Activated T-helper 1 cell treated with anti-CD3 and anti-CD28 coated beads, Interleukin-12 subunit alpha, Interleukin-12 subunit beta, Interleukin-2, Interleukin-4 antibody, amounts not matched to agents 30 ng/mL and 10 ng/mL and 1 ng/mL, durations not matched to agents 14 hours and 24 hours and 36 hours (primary cell): ENCODE measurements at regions of chr16 and their contacts with region 1.

Region 1: GRCh38 chr16:75011634-75012307 is 12.9 kb downstream of the ZNRF1 start:
- DNase-seq: peak; percentile 53
- H3K4me3 Mint-ChIP-seq: peak overlapping the region; percentile 80
- H3K27ac Mint-ChIP-seq: peak overlapping the region; percentile 98
- H3K4me1 Mint-ChIP-seq: peaks cover 65% of the 10 kb centered on the region
- H3K27me3 Mint-ChIP-seq: no peaks in the 10 kb centered on the region

Region 2: GRCh38 chr16:74843719-74844433 is 167.9 kb before region 1 on chr16:
- intact Hi-C with region 1: no loop called
- DNase-seq: no peak
- H3K4me3 Mint-ChIP-seq: no peak overlapping the region
- H3K27ac Mint-ChIP-seq: no peak overlapping the region
- H3K4me1 Mint-ChIP-seq: no peaks in the 10 kb centered on the region
- H3K27me3 Mint-ChIP-seq: peaks cover 15% of the 10 kb centered on the region

Region 3: DNA sequence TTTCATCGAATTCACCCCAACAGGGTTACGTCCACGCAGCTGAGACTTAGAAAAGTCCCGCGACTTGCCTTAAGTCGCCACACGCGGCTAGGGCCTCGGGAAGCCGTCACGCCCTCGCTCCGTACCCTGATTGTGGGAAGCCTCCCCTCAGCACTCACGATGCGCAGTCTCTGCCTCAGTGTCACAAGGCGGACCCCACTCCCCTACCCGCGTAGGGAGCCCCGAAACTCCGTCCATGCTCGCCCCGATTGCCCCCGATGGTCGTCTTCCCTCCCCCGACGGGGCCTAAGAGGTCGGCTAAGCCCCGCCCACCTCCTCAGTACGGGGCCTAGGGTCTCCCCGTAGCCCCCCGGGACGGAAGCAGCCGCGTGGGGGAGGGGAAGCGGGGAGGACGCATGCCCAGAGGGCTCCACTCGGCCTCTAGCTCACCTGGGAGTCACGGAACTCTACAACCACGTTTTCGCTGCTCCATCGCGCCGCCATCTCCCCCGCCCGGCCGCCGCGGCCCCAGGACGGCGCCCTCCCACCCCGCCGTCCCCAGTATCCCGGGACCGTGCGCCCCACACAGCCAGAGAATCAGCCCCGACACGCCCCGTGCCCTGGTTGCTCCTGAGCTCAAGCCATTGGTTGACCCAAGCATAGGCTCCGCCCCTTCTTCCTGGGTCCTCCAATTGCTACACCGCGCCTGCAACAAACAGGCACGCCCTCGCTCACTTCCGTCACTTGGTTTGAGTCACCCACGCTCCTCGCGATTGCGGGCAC is 27.1 kb before region 1 on chr16 and contains the start of gene WDR59:
- intact Hi-C with region 1: loop called (anchors 1 kb)
- DNase-seq: peak; percentile 99
- H3K4me3 Mint-ChIP-seq: peak within 1 kb of the TSS; percentile 90
- H3K27ac Mint-ChIP-seq: peak within 1 kb of the TSS; percentile 90
- H3K4me1 Mint-ChIP-seq: peaks cover 14% of the 10 kb centered on the region
- H3K27me3 Mint-ChIP-seq: peaks cover 3% of the 10 kb centered on the region
- total RNA-seq, gene WDR59: 85.9 and 95.3 TPM in 2 replicates

Region 4: GRCh38 chr16:75023009-75023408 is 11.2 kb after region 1 on chr16:
- intact Hi-C with region 1: loop called (anchors 1 kb)
- DNase-seq: no peak
- H3K4me3 Mint-ChIP-seq: peak overlapping the region; percentile 46
- H3K27ac Mint-ChIP-seq: peak overlapping the region; percentile 86
- H3K4me1 Mint-ChIP-seq: peaks cover 47% of the 10 kb centered on the region
- H3K27me3 Mint-ChIP-seq: no peaks in the 10 kb centered on the region

Region 5: DNA sequence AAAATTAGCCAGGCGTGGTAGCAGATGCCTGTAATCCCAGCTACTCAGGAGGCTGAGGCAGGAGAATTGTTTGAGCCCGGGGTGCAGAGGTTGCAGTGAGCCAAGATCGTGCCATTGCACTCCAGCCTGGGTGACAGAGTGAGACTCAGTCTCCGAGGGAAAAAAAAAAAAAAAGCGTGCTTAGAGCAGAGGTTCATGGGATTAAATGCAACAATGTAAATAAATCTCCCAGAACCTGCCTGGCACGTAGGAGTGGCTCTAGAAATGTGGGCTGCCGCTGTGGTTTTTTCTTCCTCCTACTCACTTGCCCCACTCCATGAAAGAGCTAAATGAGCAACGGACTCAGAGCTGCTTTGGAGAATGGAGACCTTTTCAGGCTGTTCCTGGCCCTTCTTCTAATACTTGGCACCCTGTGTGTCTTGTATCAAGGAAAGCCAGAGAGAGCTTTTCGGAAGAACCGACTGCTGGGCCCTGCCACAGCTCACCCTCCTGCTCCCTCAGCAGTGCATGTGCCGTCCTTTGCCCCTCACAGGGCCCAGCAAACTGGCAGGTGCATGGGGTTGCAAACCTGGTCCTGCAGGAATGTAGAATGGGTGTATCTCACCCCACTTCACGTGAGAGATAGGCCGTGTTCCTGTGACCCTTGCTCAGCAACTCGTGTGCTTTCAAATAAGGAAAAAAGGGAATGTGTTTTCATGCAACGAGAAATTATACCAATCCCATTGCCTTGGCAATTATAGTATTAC is 52.8 kb after region 1 on chr16:
- intact Hi-C with region 1: loop called (anchors 2 kb)
- DNase-seq: peak; percentile 17
- H3K4me3 Mint-ChIP-seq: peak overlapping the region; percentile 70
- H3K27ac Mint-ChIP-seq: peak overlapping the region; percentile 85
- H3K4me1 Mint-ChIP-seq: peaks cover 79% of the 10 kb centered on the region
- H3K27me3 Mint-ChIP-seq: no peaks in the 10 kb centered on the region

Region 6: DNA sequence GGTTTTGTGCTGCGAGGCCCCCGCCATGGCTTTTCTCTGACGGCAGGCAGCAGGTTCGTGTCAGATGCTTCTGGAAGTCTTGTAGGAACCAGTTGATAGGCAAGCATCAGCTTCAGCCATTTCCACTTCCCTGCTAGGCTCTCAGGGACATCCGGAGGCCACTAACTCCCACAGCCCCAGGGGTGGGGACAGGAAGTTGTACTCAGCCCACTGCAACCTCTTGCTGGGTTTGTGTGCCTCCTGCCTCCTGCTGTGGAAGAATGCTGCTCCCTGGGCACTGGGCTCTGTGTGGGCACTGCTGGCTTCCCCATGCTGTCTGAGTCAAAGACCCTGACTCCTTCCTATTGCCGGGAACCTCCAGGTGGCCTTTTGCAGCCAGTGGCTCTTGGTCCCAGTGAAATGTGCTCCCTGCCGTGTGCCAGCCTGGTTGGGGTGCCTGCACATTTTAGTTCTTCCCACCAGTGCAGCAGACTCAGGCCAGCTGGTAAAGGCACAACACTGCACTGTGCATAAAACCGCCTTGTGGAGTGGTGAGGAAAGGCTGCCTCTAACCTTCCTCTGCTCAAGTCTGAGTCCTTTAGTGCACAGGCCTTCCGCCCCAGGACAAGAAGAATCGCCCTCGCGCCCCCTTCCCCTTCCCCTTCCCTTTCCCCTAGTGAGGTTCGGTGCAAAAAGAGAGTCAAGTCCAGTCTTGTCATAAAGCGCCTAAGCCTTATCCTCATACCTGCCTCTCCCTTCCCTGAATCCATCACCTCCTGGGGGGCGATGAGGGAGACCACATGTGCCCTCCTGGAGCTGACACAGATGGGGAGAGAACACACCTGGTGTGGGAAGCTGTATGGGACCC is 88.2 kb after region 1 on chr16:
- intact Hi-C with region 1: loop called (anchors 1 kb)
- DNase-seq: peak; percentile 41
- H3K4me3 Mint-ChIP-seq: peak overlapping the region; percentile 46
- H3K27ac Mint-ChIP-seq: peak overlapping the region; percentile 95
- H3K4me1 Mint-ChIP-seq: peaks cover 83% of the 10 kb centered on the region
- H3K27me3 Mint-ChIP-seq: no peaks in the 10 kb centered on the region